BJ (cell line): ENCODE measurements at regions of chr17 and their contacts with region 1.

Region 1: DNA sequence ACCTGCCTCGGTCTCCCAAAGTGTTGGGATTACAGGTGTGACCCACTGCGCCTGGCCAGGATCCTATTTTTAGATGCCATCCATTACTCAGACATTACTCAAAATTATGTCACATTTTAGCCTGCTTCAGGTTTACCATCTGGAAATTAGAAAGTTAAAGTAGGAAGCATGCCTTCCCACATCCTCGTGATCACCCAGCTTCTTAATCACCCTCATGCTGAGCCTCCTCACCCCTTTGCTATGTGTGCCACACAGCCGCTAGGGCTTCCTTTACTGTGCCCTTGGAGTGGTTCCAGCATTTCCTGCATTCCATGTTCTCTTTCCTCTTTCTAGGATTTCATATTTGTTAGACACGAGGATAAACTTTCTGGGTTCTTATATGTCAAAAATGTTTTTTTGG is 9.3 kb downstream of the ADORA2B start:
- DNase-seq: peak; percentile 51
- H3K4me3 ChIP-seq: no peak overlapping the region
- H3K27me3 ChIP-seq: no peaks in the 10 kb centered on the region
- CTCF ChIP-seq: 0 out of 2 replicates have a peak, but pooled peaks have one; percentile 11

Region 2: DNA sequence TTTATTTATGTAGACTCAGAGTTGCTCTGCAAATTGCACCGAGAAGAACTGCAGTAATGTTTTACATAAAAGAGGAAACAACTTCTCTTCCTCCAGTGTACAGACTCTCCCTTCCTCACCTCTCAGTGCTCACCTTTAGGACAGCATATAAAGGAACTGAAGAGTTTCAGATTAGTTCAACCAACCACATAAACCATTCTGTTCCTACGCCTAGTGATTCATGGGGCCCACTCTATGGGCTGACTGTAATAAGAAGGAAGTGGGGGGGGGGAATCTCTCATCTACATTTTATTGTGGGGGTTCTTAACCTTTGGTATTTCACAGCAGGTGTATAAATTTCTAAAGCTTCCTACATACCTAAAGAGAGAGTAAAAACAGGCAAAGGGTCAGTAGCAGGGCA is 27.0 kb after region 1 on chr17:
- CTCF ChIA-PET with region 1: interaction called, 3 read pairs
- POLR2A ChIA-PET with region 1: interaction called, 13 read pairs
- DNase-seq: no peak
- H3K4me3 ChIP-seq: no peak overlapping the region
- H3K27me3 ChIP-seq: no peaks in the 10 kb centered on the region
- CTCF ChIP-seq: no peak